ENCODE measurements at regions of chr17 and their contacts with region 1.

Region 1: GRCh38 chr17:2656283-2656682 is 55.3 kb downstream of the CLUH start:
- DNase-seq: no peak
- ATAC-seq: no peak
- H3K4me3 ChIP-seq: no peak overlapping the region
- H3K27ac ChIP-seq: no peak overlapping the region
- H3K4me1 ChIP-seq: 0 out of 2 replicates have a peak, but pooled peaks cover 4% of the 10 kb centered on the region
- H3K27me3 ChIP-seq: no peaks in the 10 kb centered on the region
- CTCF ChIP-seq: no peak

Region 2: GRCh38 chr17:2688351-2689342 is 32.4 kb after region 1 on chr17:
- CTCF ChIA-PET with region 1: no interaction called
- POLR2A ChIA-PET with region 1: no interaction called
- in situ Hi-C with region 1: no loop called
- intact Hi-C with region 1: no loop called
- DNase-seq: no peak
- ATAC-seq: peak; percentile 40
- H3K4me3 ChIP-seq: no peak overlapping the region
- H3K27ac ChIP-seq: peak overlapping the region; percentile 34; the same call in 1 of the 2 replicates
- H3K4me1 ChIP-seq: peaks cover 14% of the 10 kb centered on the region
- H3K27me3 ChIP-seq: no peaks in the 10 kb centered on the region
- CTCF ChIP-seq: no peak

Region 3: DNA sequence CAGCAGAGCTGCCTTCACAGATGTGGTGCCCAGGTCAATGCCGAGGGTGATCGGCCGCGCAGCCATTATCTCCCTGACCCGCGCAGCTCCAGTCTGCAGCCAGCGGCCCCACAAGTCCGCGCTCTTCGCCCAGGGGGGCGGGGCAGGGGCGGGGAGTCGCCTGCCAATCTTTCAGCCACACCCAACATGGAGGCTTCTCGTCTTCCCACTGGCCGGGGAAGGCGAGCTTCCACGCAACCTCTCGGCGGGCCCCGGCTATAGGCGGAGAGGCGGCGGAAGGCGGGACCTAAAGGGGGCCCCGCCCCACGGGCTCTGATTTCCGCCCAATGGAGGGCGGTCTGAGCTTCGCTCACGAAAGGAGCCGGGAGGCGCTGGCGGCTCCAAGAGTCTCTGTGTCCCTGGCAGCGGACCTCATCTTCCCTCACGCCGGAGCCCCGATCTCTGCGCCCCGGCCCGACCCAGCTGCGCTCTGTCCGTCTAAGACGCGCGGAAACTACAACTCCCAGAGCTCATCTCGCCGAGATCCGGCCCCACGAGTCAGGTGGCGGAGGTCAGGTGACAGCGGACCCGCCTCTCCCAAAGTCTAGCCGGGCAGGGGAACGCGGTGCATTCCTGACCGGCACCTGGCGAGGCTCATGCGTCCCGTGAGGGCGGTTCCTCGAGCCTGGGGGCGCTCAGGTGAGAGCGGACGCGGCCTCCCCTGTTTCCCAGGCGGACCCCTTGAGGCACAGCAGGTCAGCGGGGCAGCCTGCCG is 980.0 kb after region 1 on chr17 and contains the starts of genes CTNS and SHPK:
- CTCF ChIA-PET with region 1: no interaction called
- POLR2A ChIA-PET with region 1: interaction called, 10 read pairs
- in situ Hi-C with region 1: no loop called
- intact Hi-C with region 1: no loop called
- DNase-seq: peak; percentile 64
- ATAC-seq: peak; percentile 99
- H3K4me3 ChIP-seq: peak within 1 kb of the TSS; percentile 80 to 85
- H3K27ac ChIP-seq: peak within 1 kb of the TSS; percentile 86
- H3K4me1 ChIP-seq: 0 out of 2 replicates have a peak, but pooled peaks cover 4% of the 10 kb centered on the region
- H3K27me3 ChIP-seq: no peaks in the 10 kb centered on the region
- CTCF ChIP-seq: no peak
- total RNA-seq, gene CTNS: 20.4 TPM
- total RNA-seq, gene SHPK: 8.4 TPM